ENCODE measurements at regions of chr6 and their contacts with region 1.

Region 1: DNA sequence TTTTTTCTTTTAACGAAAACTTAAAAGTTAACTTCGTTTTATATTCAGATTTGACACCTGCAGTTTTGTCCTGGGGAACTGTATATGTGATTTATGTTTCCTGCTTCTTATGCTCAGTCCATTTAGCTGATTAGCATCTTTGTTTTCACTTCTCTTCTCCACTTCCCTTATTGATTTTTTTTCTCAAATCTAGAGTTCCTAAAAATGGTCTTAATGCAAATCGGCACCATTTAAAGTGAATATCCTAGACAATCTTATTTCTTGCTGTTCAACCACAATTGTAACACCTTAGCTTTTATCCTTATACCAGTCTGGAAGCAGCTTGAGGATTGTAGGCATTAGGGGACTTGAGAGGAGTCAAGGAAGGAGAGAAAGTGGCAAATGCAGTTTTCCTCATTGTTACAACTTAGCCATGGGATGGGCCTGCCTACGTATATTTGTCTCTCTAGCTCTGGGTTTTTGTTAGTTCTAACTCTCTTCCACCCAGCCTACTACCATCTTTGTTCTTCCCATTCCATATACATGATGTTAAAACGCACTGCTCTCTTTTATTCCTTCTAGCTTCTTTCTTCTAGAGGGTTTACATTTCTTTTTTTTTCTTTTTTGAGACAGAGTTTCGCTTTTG is 8.5 kb downstream of the QRSL1 start:
- DNase-seq: no peak
- ATAC-seq: peak; percentile 87
- H3K4me3 Mint-ChIP-seq: peak overlapping the region; percentile 69
- H3K27ac Mint-ChIP-seq: peak overlapping the region; percentile 90
- H3K4me1 Mint-ChIP-seq: peaks cover 80% of the 10 kb centered on the region
- H3K27me3 Mint-ChIP-seq: no peaks in the 10 kb centered on the region
- CTCF ChIP-seq: no peak

Region 2: GRCh38 chr6:106648651-106649308 is 11.0 kb after region 1 on chr6:
- CTCF ChIA-PET with region 1: interaction called, 6 read pairs
- POLR2A ChIA-PET with region 1: interaction called, 36 read pairs
- intact Hi-C with region 1: loop called (anchors 1 kb)
- DNase-seq: no peak
- ATAC-seq: peak; percentile 96
- H3K4me3 Mint-ChIP-seq: peak overlapping the region; percentile 84
- H3K27ac Mint-ChIP-seq: peak overlapping the region; percentile 96
- H3K4me1 Mint-ChIP-seq: peaks cover 48% of the 10 kb centered on the region
- H3K27me3 Mint-ChIP-seq: no peaks in the 10 kb centered on the region
- CTCF ChIP-seq: no peak

Region 3: DNA sequence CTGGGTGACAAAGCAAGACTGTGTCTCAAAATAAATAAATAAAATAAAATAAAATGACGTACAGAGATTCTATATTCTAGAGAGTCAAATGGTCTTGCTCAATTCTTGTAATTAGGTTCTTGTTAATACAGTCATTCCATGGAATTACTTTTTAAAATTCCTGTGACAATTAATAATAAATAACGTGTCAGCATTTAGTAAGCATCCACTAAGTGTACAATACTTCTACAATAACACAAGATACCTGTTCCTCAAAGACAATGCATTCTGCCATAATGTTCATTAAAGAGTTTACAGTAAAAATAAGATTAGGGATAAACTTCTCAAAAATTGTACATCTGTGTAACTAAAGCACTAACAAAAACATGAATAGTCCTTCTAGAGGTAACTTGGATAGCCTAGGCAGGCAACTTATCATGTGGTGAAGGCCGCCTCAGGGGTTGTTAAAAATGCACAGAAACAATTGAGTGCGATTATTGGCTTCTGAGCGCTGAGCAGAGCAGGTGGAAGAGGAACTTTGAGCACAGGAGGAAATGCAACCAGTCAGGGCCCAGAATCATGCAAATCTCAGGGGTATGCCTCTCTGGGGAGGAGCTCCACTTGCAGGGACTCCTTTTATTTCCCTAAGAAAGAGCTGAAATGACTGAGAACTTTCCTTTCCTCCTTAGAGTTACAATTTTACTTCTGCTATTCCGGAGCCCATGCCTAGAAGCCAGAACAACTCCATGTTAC is 28.6 kb after region 1 on chr6:
- CTCF ChIA-PET with region 1: no interaction called
- POLR2A ChIA-PET with region 1: interaction called, 7 read pairs
- intact Hi-C with region 1: loop called (anchors 1 kb)
- DNase-seq: peak; percentile 49
- ATAC-seq: peak; percentile 99
- H3K4me3 Mint-ChIP-seq: peak overlapping the region; percentile 66
- H3K27ac Mint-ChIP-seq: peak overlapping the region; percentile 87
- H3K4me1 Mint-ChIP-seq: peaks cover 66% of the 10 kb centered on the region
- H3K27me3 Mint-ChIP-seq: no peaks in the 10 kb centered on the region
- CTCF ChIP-seq: no peak

Region 4: DNA sequence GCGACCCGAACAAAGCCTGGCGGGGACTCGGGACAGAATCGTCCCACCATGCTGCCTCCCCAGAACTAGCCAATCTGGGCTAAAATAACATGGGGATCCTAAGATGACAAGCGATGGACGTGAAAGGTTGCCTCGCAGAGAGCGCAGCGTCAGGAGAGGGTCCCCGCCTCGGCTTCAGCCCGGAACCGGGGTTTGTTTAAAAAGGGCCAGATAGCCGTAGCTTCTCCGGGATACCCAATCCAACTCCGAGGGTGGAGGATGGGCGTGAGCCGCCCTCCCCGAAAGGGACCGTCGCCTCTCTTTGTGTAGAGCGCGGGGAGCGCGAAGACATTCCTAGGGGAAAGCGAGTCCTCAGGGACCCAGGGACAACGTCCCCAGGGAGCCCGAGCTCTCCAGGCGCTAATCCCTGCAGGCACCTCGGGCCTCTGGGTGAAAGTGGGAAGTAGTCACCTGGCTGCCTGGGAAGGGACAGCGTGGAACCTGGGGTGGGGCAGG is 336.1 kb after region 1 on chr6:
- CTCF ChIA-PET with region 1: interaction called, 9 read pairs
- POLR2A ChIA-PET with region 1: interaction called, 6 read pairs
- intact Hi-C with region 1: loop called (anchors 1 kb)
- DNase-seq: no peak
- ATAC-seq: peak; percentile 10
- H3K4me3 Mint-ChIP-seq: peak overlapping the region; percentile 93
- H3K27ac Mint-ChIP-seq: peak overlapping the region; percentile 85
- H3K4me1 Mint-ChIP-seq: peaks cover 39% of the 10 kb centered on the region
- H3K27me3 Mint-ChIP-seq: no peaks in the 10 kb centered on the region
- CTCF ChIP-seq: no peak